ENCODE measurements at regions of chr5 and their contacts with region 1.

Region 1: DNA sequence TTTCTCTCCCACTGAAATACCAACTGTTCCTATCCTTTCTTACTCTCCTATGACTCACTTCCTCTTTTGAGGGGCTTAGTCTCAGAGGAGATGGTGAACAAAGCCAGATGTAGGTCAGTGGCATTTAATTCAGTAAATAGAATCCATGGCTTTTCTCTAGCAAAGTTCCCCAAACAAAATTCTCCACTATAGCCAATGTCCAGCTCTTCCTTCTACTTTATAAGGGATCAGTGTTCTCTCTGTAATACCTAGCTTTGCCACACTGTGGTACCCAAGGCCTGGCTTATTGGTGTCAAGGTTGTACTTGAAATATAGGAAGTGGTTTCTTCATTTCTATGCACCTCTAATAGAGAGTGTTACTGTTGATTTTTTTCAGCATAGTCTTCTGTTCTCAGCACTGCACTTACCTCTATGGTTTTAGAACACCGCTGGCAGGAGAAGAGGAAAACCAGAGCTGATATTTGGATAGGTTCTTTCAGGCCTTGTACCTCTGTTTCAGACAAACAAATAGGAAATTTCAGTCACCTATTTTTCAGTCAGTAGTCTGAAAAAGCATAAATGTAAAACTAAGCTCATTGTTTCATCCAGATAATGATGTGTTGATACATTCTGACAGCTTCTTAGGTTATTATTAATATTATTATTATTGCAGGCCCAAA is 40.6 kb upstream of the ITGA2 start:
- DNase-seq: peak; percentile 34
- ATAC-seq: peak; percentile 95 to 96

Region 2: DNA sequence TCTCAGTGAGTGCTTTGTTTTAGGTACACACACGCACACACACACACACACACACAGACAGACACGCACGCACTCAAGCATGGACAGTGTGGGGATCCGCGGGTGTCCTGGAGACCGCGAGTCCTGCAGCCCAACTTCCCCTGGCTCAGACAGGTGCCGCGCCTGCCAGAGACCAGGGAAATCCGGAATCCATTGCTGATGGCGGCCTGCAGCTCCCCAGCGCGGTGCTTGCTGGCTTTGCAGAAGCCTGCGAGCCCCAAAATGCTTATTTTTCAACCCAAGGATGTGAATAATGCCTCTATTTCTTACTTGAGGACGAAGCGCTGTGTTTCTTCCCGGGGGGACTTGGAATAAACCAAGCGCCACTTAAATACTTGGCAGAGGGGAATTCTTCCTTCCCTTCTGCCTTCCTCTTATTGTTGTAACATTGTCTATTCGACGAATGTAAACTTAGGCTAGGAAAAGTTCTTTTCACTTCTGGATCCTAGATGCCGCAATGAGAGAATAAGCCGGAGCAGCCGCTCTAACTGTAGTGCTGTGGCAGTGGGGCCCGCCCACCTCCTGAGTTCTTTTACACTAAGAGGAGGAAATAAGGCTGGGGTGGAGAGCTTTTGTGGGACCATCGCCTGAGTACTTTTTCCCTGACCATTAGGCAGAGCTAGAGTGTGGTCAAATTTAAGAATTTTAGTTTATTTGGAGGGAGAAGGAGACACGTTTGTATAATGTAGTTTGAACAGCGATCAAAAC is 41.4 kb after region 1 on chr5:
- intact Hi-C with region 1: loop called in 1 of 2 experiments (anchors 5 kb)
- DNase-seq: peak; percentile 58
- ATAC-seq: peak; percentile 69 to 82

Region 3: DNA sequence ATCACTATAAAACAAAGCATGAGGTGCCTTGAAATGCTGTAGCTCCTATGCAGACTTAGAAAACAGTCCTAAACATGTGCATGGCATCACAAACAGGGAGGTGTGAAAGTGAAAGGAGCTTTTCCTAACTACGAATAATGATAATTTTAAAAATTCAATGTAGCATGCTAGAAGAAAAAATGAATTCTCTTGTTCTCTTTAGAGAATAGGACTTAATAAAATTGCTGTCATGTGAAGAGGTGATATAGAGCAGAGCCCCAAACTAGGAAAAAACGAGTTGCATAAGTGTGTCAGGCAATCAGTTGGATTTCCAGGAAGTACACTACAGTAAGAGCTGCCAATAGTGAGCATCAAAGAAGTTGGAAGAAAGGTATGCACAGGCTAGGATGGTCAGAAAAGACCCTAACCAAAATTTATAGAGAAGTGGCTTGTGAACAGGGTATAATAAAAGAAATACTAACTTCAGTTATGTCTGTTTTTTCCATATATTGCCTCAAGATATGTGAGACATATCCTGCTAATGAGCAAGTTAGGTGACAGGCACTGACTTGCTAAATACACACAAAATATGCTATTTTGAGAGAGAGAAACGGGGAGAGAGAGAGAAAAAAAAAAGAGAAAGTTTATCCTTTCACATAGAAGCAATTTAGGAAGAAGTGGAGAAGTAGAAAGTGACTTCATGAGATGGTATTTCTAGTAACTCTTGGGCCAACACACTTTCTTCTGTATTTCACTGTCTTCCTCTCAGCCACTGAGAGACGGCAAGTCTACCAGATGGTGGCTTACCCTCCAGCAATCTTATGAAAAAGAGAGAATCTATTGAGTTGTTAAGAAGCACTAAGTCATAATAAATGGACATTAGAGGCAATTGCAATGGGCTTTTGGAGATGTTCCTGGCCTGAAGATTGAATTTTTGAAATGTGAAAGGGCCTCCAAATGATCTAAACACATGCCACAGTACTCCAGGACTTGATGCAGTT is 58.7 kb after region 1 on chr5:
- intact Hi-C with region 1: no loop called
- DNase-seq: no peak
- ATAC-seq: no peak

Region 4: GRCh38 chr5:53095931-53096525 is 147.5 kb after region 1 on chr5:
- intact Hi-C with region 1: loop called (anchors 1 to 5 kb)
- DNase-seq: peak; percentile 46
- ATAC-seq: peak; percentile 55 to 71

Region 5: GRCh38 chr5:54217826-54218503 is 1269.4 kb after region 1 on chr5:
- intact Hi-C with region 1: loop called in 1 of 2 experiments (anchors 10 kb)
- DNase-seq: no peak
- ATAC-seq: peak; percentile 79 to 83